Activated CD4-positive, alpha-beta memory T cell treated with anti-CD3 and anti-CD28 coated beads for 36 hours (primary cell): ENCODE measurements at regions of chr2 and their contacts with region 1.

Region 1: DNA sequence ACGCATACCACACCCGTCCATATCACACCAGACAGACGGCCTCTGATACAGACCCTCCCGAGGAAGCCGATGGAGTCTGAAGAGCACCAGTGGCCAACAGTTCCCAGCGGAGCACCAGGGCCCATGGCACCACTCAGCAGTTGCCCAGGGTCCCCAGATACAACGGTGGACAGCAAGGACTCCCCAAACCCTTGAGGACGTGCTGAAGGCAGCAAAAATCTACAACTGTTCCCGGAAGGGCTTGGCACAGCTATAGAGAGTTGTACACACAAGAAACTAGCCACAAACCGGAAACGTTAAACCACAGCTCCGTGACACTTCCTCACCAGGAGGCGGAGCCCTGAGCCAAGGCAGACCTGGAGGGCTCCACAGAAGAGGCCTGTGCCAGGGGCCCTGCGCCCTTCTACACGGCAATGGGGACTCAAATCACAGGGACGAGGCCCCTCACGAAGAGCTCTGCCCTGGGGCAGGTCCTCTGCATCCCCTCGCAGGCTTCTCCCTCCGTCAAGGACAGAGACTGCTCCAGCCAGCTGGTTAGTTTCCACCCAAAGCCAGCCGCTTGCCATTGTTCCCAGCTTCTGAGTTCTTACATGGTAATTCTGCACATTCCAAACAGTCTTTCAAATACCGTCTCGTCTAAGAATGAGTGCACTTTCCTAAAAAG is 133.4 kb downstream of the HDAC4 start:
- DNase-seq: peak; percentile 96
- H3K4me3 Mint-ChIP-seq: peak overlapping the region; percentile 78
- H3K27ac Mint-ChIP-seq: peak overlapping the region; percentile 93
- H3K4me1 Mint-ChIP-seq: peaks cover 75% of the 10 kb centered on the region
- H3K27me3 Mint-ChIP-seq: peaks cover 15% of the 10 kb centered on the region

Region 2: DNA sequence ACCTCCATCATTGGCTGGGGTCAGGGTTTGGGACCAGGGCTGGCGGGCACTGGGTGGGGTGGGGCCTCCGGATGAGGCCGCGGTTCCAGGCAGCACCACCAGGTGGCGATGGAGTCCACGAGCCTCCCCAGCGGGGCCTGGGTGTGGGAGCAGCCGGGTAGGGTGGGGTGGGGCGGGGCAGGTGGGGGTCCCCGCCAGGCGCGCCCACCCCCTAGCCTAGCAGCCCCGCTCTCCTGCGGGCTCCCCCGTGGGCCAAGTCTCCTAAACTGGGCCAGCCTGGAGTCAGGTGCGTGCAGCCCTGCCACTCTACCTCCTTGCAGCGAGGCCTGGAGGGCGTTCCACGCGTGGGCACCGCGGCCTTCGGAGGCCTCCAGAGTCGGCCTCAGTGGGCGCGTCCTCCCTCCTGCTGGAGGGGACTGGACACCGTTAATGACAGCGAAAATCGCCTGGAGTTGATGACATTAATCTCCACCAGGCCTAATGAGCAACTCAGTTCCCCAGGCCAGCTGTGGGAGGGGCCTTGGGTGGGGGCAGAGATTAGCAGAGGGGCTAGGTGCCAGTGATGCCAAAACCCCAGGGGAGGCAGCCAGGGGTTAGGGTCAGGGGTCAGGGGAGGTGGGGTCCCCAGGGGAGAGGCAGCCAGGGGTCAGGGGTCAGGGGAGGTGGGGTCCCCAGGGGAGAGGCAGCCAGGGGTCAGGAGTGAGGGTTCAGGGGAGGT is 231.9 kb before region 1 on chr2:
- CTCF ChIA-PET with region 1: no interaction called
- POLR2A ChIA-PET with region 1: no interaction called
- intact Hi-C with region 1: loop called (anchors 2 kb)
- DNase-seq: peak; percentile 76
- H3K4me3 Mint-ChIP-seq: no peak overlapping the region
- H3K27ac Mint-ChIP-seq: no peak overlapping the region
- H3K4me1 Mint-ChIP-seq: no peaks in the 10 kb centered on the region
- H3K27me3 Mint-ChIP-seq: peaks cover 5% of the 10 kb centered on the region

Region 3: DNA sequence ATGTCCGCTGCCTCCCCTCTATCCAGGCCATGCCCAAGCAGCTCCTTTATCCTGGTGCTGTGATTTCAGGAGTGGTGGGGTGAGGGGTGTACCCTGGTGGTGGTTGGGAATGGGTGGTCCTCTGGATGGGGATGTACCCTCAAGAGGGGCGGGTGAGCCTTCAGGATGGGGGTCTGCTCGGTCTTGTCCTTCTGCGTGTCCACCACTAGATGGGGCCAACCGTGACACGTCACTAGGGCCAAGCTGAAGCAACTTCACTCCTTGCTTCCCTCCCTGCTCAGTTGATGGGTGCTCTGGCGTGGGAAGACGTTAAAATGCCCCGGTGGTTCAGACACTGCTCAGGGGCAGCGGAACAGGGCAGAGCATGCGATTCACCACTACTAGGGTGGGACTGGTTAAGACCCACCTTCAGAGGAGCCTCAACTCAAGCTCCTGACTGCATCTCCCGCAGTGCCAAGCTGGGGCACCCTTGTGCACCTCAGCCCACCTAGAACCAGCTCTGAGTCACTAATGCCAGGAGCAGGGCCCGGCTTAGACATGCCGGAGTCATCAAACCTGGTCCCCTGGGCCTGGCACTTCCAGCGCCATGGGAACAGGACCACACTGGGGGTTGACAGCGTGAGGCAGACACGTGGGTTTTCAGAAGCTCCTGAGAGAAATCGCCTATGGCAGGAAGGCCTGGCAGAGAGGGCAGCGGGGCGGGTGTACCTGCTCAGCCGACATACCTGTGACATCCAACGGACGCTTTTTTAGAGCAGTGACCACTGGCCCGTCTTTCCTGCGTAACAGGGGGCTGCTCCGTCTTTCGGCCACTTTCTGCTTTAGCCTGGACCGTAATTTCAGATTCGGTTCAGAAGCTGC is 123.3 kb before region 1 on chr2:
- CTCF ChIA-PET with region 1: no interaction called
- POLR2A ChIA-PET with region 1: no interaction called
- intact Hi-C with region 1: loop called (anchors 2 kb)
- DNase-seq: peak; percentile 37
- H3K4me3 Mint-ChIP-seq: no peak overlapping the region
- H3K27ac Mint-ChIP-seq: peak overlapping the region; percentile 18
- H3K4me1 Mint-ChIP-seq: peaks cover 7% of the 10 kb centered on the region
- H3K27me3 Mint-ChIP-seq: no peaks in the 10 kb centered on the region

Region 4: GRCh38 chr2:239216614-239217273 is 50.7 kb before region 1 on chr2:
- CTCF ChIA-PET with region 1: no interaction called
- POLR2A ChIA-PET with region 1: interaction called, 7 read pairs
- intact Hi-C with region 1: loop called (anchors 1 kb)
- DNase-seq: peak; percentile 69
- H3K4me3 Mint-ChIP-seq: peak overlapping the region; percentile 74
- H3K27ac Mint-ChIP-seq: peak overlapping the region; percentile 88
- H3K4me1 Mint-ChIP-seq: peaks cover 64% of the 10 kb centered on the region
- H3K27me3 Mint-ChIP-seq: no peaks in the 10 kb centered on the region

Region 5: DNA sequence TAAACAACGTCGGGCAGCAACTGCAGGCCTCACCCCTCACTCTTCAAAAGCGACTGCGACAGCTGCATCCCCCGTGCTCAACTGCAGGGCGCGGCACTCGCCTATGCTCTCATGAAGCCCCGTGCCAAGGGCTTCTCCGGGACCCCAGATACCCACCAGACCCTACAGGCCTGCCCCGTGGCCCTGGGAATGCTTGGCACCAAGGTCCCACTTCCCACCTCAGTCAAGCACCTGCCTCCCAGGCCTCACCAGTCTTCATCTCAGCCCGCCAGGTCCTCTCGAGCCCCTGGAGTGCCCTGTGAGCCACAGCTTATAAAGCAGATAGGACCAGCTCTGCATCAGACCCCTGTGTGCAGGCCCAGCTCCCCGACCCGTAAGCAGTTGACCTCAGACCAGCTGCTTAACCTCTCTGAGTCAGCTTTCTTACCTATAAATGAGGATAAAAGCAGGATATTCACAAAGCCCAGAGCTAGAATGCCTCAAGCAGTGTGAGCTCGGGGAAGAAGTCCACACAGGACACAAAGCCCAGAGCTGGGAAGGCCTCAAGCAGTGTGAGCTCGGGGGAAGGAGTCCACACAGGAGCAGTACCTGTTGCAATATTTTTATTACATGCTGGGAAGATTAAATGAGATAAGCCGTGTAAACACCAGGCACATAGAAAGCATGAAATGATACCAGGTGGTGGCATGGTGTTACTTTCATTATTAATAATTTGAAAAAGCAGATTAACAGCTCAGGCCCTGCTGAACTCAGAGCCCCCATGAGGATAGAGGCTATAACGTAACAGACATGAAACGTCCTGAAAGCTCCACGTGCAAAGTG is 36.5 kb after region 1 on chr2:
- CTCF ChIA-PET with region 1: interaction called, 4 read pairs
- POLR2A ChIA-PET with region 1: no interaction called
- intact Hi-C with region 1: loop called (anchors 5 kb)
- DNase-seq: peak; percentile 44
- H3K4me3 Mint-ChIP-seq: no peak overlapping the region
- H3K27ac Mint-ChIP-seq: no peak overlapping the region
- H3K4me1 Mint-ChIP-seq: peaks cover 30% of the 10 kb centered on the region
- H3K27me3 Mint-ChIP-seq: peaks cover 1% of the 10 kb centered on the region

Region 6: DNA sequence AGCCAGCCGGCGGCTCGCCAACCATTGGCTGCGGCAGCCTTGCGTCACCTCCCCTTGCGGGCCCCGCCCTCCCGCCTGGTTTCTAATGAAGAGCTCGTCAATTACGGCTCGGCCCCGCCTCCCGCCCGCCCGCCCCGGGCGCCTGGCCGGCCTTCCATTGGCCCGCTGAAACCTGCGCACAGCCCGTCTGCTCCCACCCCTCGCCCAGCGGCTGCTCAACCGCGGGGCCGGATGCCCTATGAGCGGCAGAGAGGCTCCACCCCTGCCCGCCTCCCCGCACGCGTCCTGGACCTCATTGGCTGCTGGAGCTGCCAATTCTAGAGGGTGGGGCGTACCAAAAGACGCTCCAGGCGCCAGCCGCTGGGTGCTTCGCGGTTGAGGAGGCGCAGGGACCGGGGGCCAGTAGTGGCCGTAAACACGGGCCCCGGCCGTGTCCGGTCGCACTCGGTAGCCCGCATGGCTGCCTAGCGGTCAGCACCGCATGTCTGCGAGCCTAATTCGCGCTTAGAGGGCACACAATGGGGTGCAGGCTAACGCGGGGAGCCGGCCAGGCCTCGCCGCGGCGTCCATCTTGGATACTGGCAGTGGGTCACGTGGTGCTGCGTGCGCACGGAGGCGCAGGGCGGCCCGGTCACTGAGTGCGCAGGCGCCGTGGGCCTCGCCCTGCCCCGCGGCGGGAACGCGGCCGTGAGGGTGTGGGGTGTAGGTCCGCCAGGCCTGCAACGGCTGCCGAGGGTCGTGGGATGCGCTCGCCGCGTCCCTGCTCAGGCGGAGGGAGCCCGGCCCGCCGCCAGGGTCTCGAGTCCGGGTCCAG is 133.9 kb after region 1 on chr2:
- CTCF ChIA-PET with region 1: interaction called, 6 read pairs
- POLR2A ChIA-PET with region 1: interaction called, 5 read pairs
- intact Hi-C with region 1: loop called (anchors 2 kb)
- DNase-seq: peak; percentile 99
- H3K4me3 Mint-ChIP-seq: peak overlapping the region; percentile 89
- H3K27ac Mint-ChIP-seq: peak overlapping the region; percentile 97
- H3K4me1 Mint-ChIP-seq: peaks cover 35% of the 10 kb centered on the region
- H3K27me3 Mint-ChIP-seq: no peaks in the 10 kb centered on the region

Region 7: GRCh38 chr2:239548451-239548871 is 281.0 kb after region 1 on chr2:
- CTCF ChIA-PET with region 1: no interaction called
- POLR2A ChIA-PET with region 1: no interaction called
- intact Hi-C with region 1: no loop called
- DNase-seq: peak; percentile 88
- H3K4me3 Mint-ChIP-seq: no peak overlapping the region
- H3K27ac Mint-ChIP-seq: no peak overlapping the region
- H3K4me1 Mint-ChIP-seq: peaks cover 56% of the 10 kb centered on the region
- H3K27me3 Mint-ChIP-seq: peaks cover 19% of the 10 kb centered on the region

Region 8: GRCh38 chr2:239700686-239701345 is 433.4 kb after region 1 on chr2:
- CTCF ChIA-PET with region 1: no interaction called
- POLR2A ChIA-PET with region 1: no interaction called
- intact Hi-C with region 1: no loop called
- DNase-seq: no peak
- H3K4me3 Mint-ChIP-seq: no peak overlapping the region
- H3K27ac Mint-ChIP-seq: no peak overlapping the region
- H3K4me1 Mint-ChIP-seq: no peaks in the 10 kb centered on the region
- H3K27me3 Mint-ChIP-seq: peaks cover 2% of the 10 kb centered on the region

Region 9: GRCh38 chr2:239882331-239882732 is 614.9 kb after region 1 on chr2:
- CTCF ChIA-PET with region 1: no interaction called
- POLR2A ChIA-PET with region 1: no interaction called
- intact Hi-C with region 1: loop called (anchors 10 kb)
- DNase-seq: peak; percentile 66
- H3K4me3 Mint-ChIP-seq: no peak overlapping the region
- H3K27ac Mint-ChIP-seq: no peak overlapping the region
- H3K4me1 Mint-ChIP-seq: peaks cover 3% of the 10 kb centered on the region
- H3K27me3 Mint-ChIP-seq: peaks cover 2% of the 10 kb centered on the region